Transverse colon (tissue), 4 donors: ENCODE measurements at regions of chr16 and their contacts with region 1.

Region 1: DNA sequence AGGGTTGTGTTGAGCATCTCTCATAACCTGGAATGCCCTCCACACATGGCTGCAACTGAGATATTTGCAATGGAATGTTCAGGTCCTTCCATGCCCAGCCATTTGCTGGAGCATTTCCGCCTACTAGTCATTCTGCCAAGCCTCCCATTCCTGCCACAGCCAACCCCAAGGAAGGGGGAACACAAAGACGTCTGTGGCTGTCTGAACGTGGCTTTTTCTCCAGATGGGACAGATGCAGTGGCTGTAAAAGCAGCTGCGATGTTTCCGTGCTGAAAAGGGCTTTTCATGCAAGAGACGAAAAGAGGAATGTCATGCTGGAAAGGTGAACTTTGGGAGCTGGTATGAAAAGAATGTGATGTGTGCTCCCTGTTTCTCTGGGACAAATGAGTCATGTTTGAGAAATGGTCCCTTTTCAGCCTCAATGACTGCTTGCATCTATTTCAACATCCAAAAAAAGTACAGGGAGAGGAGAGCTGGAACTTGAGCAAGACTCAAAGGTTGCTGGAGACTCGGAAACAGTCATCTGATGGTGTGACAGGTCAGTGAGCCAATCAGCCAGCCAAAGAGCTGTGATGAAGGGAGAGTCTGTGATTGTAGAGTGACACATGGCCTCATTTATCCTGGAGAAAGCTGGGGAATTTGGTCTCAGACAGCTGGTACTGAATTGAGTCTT is 208.9 kb downstream of the SHISA9 start:
- DNase-seq: no peak
- H3K4me3 ChIP-seq: no peak overlapping the region
- H3K27ac ChIP-seq: no peak overlapping the region
- H3K4me1 ChIP-seq: no peaks in the 10 kb centered on the region
- H3K27me3 ChIP-seq: no peaks in the 10 kb centered on the region
- CTCF ChIP-seq: no peak
- EP300 ChIP-seq: no peak
- POLR2A ChIP-seq: no peak

Region 2: DNA sequence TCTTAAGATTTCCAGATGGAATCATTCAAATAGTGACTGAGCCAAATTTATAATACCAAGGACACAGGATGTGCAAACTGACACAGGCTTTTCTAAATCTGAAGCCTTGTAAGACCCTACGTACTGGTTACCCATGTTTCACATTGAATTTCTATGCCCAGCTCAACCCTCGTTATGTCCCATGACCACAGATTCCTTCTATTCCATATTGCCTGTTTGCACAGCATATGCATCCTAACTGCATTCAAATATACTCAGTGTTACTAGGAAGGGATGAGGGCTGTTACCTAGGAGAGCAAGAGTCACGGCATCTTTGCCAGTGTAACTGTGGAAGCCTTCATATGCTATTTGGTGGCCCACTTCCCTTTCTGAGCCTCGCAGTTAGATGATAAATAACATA is 96.3 kb after region 1 on chr16:
- in situ Hi-C with region 1: loop called in 1 of 4 experiments (anchors 25 kb)
- intact Hi-C with region 1: no loop called
- DNase-seq: no peak
- H3K4me3 ChIP-seq: no peak overlapping the region
- H3K27ac ChIP-seq: no peak overlapping the region
- H3K4me1 ChIP-seq: no peaks in the 10 kb centered on the region
- H3K27me3 ChIP-seq: no peaks in the 10 kb centered on the region
- CTCF ChIP-seq: no peak
- EP300 ChIP-seq: no peak
- POLR2A ChIP-seq: no peak

Region 3: DNA sequence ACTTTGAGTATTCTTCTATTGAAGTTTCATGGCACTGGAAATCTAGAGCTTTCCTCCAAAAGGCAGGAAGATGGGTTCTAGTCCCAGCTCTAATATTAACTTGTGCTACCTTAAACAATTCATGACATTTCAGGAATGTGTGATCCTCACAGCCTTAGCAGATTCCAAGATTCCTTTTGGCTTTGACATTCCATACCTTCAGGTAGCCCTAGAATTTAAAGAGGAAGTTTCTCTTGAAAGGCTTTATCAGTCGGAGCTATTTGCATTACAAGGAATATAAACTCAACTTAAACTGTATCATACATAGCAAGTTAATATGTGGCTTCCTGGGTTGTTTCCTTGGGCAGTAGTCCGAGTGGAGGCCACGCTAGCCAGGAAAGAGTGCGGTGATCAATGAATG is 121.1 kb after region 1 on chr16:
- in situ Hi-C with region 1: loop called in 1 of 4 experiments (anchors 25 kb)
- intact Hi-C with region 1: no loop called
- DNase-seq: no peak
- H3K4me3 ChIP-seq: no peak overlapping the region
- H3K27ac ChIP-seq: no peak overlapping the region
- H3K4me1 ChIP-seq: no peaks in the 10 kb centered on the region
- H3K27me3 ChIP-seq: no peaks in the 10 kb centered on the region
- CTCF ChIP-seq: no peak
- EP300 ChIP-seq: no peak
- POLR2A ChIP-seq: no peak